ENCODE measurements at regions of chr16 and their contacts with region 1.

Region 1: GRCh38 chr16:89700100-89700648 is 1.3 kb downstream of the SPATA2L start:
- DNase-seq: peak; percentile 100
- H3K4me3 ChIP-seq: peak overlapping the region; percentile 73 to 94 (median 82)
- H3K27ac ChIP-seq: peak overlapping the region; percentile 74 to 86 (median 80)
- H3K4me1 ChIP-seq: peaks cover 15 to 32% (median 30%) of the 10 kb centered on the region in 4 donors
- H3K27me3 ChIP-seq: no peaks in the 10 kb centered on the region
- CTCF ChIP-seq: peak; percentile 69 to 88 (median 82)
- EP300 ChIP-seq: no peak
- POLR2A ChIP-seq: no peak

Region 2: DNA sequence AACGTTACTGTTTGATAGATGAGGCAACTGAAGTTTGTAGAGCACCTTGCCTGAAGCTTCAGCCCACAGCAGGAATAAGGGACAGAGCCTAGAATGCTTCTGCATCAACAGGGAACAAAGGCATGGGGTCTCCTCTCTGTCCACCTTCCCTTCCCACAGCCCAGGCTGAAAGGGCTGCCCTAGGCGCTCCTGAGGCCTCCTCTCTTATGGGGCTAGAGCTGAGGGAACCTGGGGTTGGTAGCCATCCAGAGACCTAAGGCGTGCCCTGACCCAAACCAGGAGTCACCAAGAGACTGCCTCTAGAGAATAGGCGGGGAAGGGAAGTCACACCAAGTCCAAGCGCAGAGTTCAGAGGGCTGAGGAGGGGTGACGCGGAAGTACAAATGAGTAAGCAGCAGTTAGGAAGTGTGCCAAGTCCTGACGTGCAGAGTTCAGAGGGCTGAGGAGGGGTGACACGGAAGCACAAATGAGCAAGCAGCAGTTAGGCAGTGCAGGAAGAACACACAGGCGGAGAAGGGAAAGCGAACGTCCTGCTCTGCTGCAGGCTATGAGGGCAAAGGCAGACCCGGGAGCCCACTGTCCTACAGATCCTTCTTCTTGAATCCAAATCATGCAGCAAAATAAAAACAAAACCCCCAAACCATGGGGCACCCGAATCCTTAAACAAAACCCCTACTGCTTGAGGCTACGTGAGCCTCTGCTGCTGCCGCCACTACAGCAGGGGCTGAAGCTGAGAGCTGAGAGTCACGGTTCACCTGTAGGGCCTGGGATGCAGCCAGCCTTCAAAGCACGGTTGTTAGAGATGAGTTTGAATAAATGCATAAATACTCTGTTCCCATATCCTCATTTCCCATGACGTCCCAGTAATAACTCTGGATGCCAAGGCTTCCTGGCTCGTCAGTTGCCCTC is 194.7 kb before region 1 on chr16:
- intact Hi-C with region 1: no loop called
- DNase-seq: peak; percentile 97
- H3K4me3 ChIP-seq: peak overlapping the region in 2 of 4 donors; percentile 13 to 32
- H3K27ac ChIP-seq: peak overlapping the region; percentile 55 to 81 (median 68)
- H3K4me1 ChIP-seq: peaks cover 38 to 46% (median 44%) of the 10 kb centered on the region in 4 donors
- H3K27me3 ChIP-seq: no peaks in the 10 kb centered on the region
- CTCF ChIP-seq: no peak
- EP300 ChIP-seq: no peak
- POLR2A ChIP-seq: no peak

Region 3: DNA sequence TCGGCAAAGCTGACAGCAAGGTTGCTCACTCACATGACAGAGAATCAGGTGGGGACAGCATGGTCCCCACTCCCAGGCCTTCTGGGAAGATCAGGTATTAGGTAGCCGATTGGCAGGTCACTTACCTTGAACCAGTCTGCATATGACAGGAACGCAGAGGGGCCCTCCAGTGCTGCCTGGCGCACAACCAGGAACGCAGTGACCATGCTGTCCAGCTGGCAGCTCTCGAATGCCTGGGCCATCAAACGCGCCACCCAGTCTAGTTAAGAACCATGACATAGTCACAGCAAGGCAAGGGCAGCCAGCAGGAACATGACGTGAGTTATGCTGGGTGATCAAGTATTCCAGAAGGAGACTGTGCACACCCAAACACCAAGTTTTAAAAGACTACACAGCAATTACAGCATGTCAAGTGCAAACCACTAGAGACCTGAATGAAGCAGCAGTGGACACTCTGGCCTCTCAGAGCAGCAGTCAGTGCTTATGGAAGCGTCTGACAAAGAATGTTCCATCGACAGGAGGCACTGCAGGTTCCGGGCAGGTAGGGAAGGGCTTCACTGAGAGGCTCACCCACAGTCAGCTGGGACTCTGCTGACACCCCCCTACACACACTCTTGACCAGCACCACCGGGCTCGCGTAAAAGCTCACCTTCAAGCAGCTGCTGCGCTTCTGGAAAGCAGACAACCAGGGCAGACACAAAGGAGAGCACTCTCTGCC is 91.3 kb after region 1 on chr16:
- intact Hi-C with region 1: loop called (anchors 5 kb)
- DNase-seq: no peak
- H3K4me3 ChIP-seq: no peak overlapping the region
- H3K27ac ChIP-seq: no peak overlapping the region
- H3K4me1 ChIP-seq: no peaks in the 10 kb centered on the region
- H3K27me3 ChIP-seq: no peaks in the 10 kb centered on the region
- CTCF ChIP-seq: no peak
- EP300 ChIP-seq: no peak
- POLR2A ChIP-seq: no peak

Region 4: GRCh38 chr16:89953671-89954419 is 253.7 kb after region 1 on chr16:
- intact Hi-C with region 1: no loop called
- DNase-seq: no peak
- H3K4me3 ChIP-seq: no peak overlapping the region
- H3K27ac ChIP-seq: no peak overlapping the region
- H3K4me1 ChIP-seq: peaks cover 6 to 12% (median 10%) of the 10 kb centered on the region in 4 donors
- H3K27me3 ChIP-seq: no peaks in the 10 kb centered on the region
- CTCF ChIP-seq: no peak
- EP300 ChIP-seq: no peak
- POLR2A ChIP-seq: no peak